Activated CD8-positive, alpha-beta T cell treated with anti-CD3 and anti-CD28 coated beads, Interleukin-2, amount 10 ng/mL, durations not matched to agents 7 days and 5 days (primary cell): ENCODE measurements at regions of chr2 and their contacts with region 1.

Region 1: GRCh38 chr2:61176755-61177726 is 15.1 kb downstream of the C2orf74 start:
- DNase-seq: peak; percentile 94
- ATAC-seq: peak; percentile 89
- H3K4me3 Mint-ChIP-seq: peak overlapping the region; percentile 85
- H3K27ac Mint-ChIP-seq: peak overlapping the region; percentile 84
- H3K4me1 Mint-ChIP-seq: peaks cover 54% of the 10 kb centered on the region
- H3K27me3 Mint-ChIP-seq: peaks cover 10% of the 10 kb centered on the region

Region 2: GRCh38 chr2:60550178-60550983 is 626.7 kb before region 1 on chr2:
- CTCF ChIA-PET with region 1: no interaction called
- POLR2A ChIA-PET with region 1: no interaction called
- DNase-seq: peak; percentile 62
- ATAC-seq: peak; percentile 53
- H3K4me3 Mint-ChIP-seq: peak overlapping the region; percentile 81
- H3K27ac Mint-ChIP-seq: no peak overlapping the region
- H3K4me1 Mint-ChIP-seq: peaks cover 33% of the 10 kb centered on the region
- H3K27me3 Mint-ChIP-seq: peaks cover 68% of the 10 kb centered on the region

Region 3: DNA sequence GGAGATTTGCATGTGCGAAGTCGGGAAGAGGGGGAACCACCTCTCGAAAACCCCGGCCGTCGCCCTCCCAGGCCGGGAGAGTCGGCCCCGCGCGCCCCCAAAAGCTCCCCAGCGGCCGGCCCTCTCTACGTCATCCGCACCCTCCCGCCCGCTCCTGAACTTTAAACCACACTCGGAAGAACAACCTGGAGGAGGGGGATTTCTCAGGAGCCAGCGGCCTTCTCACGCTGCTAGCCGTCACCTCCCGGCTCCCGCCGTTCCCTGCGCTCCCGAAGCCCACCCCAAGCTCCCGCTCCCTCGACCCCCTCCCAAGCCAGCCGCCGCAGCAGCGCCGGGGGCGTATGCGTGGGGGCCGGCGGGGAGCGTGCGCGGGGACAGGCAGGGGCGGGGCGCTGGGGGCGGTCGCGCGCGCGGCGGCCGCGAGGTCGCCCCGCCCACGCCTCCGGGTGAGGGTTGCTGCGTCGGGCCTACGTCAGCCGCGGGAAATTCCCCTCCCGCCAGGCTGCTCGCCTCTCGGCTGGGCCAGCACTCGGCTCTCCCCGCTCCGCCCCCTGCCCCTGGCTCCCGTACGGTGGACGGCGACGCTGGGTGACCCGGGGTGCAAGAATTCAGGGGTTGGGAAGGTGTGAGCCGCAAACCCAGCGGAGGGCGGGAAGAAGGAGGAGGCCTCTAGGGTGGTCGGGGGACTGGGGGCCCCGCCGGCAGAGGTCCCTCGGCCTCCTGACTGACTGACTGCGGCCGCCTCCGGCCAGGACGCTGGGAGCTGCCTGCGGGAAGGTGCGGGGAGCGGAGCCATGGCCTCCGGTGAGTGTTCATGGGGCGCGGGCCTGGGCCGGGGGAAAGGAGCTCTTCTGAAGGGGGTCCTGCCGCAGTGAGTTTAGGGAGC is 295.8 kb before region 1 on chr2 and contains the start of gene REL:
- CTCF ChIA-PET with region 1: no interaction called
- POLR2A ChIA-PET with region 1: interaction called, 10 read pairs
- DNase-seq: peak; percentile 91
- ATAC-seq: peak; percentile 89
- H3K4me3 Mint-ChIP-seq: peak within 1 kb of the TSS; percentile 95
- H3K27ac Mint-ChIP-seq: peak within 1 kb of the TSS; percentile 98
- H3K4me1 Mint-ChIP-seq: peaks cover 18% of the 10 kb centered on the region
- H3K27me3 Mint-ChIP-seq: no peaks in the 10 kb centered on the region
- total RNA-seq, gene REL: 20.1 to 21.6 TPM

Region 4: DNA sequence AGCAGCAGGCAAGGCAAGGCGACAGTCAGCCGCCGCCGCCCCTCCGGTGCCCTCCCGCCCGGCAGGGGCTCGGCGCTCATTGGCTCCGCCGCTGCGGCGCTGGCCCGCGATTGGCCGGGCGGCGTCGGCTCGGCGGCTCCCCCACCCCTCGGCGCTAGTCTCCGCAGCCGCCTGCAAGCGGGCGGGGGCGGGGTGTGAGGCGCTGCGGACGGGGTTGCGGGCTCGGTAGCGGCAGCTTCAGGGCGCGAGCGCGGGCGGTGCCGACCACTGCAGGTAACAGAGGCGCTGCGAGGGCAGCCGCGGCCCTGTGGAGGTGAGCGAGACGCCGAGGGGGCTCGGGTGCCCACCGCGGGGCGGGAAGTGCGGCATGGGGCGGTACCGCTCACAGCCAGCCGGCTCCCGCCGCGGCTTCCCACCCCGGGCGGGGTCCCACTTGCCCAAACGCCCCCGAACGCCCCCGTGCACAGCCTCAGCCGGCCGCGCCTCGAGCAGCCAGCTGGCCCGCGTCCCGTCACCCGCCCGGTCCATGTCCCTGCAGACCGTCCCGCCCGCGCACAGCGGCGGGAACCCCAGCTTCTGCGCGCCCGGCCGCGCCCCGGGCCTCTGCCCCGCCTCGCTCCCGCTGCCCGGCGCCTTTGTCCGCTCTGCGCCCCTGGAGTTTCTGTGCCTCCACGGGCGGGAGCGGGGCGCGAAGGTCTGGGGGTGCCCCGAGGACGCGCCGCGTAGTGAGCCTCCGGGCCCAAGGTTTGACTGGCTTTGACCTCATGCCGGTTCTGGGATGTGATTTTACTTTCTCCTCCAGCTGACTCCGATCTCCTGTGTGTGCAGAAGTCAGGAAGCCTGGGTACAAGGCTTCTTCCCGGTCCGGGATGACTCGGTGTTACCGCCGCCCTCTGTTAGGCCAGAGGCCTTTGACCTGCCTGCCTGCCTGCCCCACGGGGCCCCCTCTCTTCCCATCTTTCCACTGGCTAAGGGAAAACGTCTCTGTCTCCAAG is 111.0 kb before region 1 on chr2 and contains the start of gene SANBR:
- CTCF ChIA-PET with region 1: no interaction called
- POLR2A ChIA-PET with region 1: interaction called, 11 read pairs
- DNase-seq: peak; percentile 86
- ATAC-seq: peak; percentile 99
- H3K4me3 Mint-ChIP-seq: peak within 1 kb of the TSS; percentile 93
- H3K27ac Mint-ChIP-seq: peak within 1 kb of the TSS; percentile 85
- H3K4me1 Mint-ChIP-seq: peaks cover 14% of the 10 kb centered on the region
- H3K27me3 Mint-ChIP-seq: peaks cover 1% of the 10 kb centered on the region
- total RNA-seq, gene SANBR: 8.9 to 10.2 TPM

Region 5: GRCh38 chr2:61144697-61145268 is 32.3 kb before region 1 on chr2:
- CTCF ChIA-PET with region 1: no interaction called
- POLR2A ChIA-PET with region 1: interaction called, 21 read pairs
- DNase-seq: peak; percentile 95
- ATAC-seq: peak; percentile 98
- H3K4me3 Mint-ChIP-seq: peak overlapping the region; percentile 86
- H3K27ac Mint-ChIP-seq: peak overlapping the region; percentile 89
- H3K4me1 Mint-ChIP-seq: peaks cover 5% of the 10 kb centered on the region
- H3K27me3 Mint-ChIP-seq: no peaks in the 10 kb centered on the region

Region 6: DNA sequence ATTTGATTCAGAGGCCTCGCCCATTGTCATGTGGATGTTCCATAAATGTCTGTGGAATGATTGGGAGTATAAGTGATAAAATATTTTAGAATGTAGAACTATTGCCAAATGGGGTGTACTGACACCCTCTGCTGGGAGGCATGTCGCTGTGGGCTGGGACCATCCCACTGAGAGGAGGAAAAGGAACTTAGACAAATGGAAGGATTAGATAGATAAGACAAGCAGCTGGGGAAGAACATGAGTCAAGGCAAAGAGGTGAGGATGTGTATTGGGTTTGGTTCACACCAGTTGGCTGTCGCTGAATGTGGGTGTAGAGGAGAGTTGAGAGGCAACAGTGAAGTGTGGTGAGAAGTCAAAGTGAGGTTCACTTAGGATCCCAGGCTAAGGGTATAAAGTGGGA is 11.1 kb before region 1 on chr2:
- CTCF ChIA-PET with region 1: interaction called, 4 read pairs
- POLR2A ChIA-PET with region 1: interaction called, 18 read pairs
- DNase-seq: no peak
- ATAC-seq: no peak
- H3K4me3 Mint-ChIP-seq: no peak overlapping the region
- H3K27ac Mint-ChIP-seq: peak overlapping the region; percentile 3
- H3K4me1 Mint-ChIP-seq: peaks cover 3% of the 10 kb centered on the region
- H3K27me3 Mint-ChIP-seq: no peaks in the 10 kb centered on the region

Region 7: DNA sequence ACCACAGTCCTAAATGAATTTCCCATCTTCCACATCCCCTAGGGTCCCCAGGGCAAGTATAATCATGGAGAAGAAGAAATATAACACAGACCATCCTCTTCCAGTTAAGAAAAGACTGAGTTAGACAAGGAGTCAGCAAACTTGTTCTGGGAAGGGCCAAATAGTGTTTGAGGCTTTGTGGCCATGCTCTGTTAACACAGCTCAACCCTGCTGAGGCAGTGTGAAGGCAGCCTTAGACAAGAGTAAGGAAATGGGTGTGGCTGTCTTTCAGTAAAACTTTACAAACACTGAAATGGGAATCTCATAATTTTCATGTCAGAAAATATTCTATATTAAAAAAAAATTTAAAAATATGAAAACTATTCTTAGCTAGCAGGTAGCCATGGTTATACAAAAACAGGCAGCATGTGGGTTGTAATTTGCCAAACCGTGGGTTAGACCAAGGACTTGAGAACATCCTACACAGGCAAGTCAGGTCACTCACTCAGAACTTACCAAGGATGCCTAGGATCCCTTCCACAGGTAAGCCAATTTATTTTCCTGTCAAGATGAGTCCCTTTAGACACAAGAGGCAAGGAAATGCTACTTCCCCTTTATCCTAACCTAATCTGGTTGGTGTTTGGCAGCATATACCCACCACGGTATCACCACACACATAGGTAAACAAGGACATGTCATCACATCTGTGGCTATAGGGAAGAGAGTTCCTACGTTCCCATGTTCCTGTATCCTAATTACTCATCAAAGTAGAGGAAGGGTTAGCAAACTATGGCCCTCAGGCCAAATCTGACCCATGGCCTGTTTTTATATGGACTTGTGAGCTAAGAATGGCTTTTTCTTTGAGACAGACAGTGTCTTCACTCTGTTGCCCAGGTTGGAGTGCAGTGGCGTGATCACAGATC is 16.9 kb after region 1 on chr2:
- CTCF ChIA-PET with region 1: no interaction called
- POLR2A ChIA-PET with region 1: interaction called, 11 read pairs
- DNase-seq: no peak
- ATAC-seq: peak; percentile 76
- H3K4me3 Mint-ChIP-seq: no peak overlapping the region
- H3K27ac Mint-ChIP-seq: peak overlapping the region; percentile 3
- H3K4me1 Mint-ChIP-seq: peaks cover 10% of the 10 kb centered on the region
- H3K27me3 Mint-ChIP-seq: no peaks in the 10 kb centered on the region

Region 8: DNA sequence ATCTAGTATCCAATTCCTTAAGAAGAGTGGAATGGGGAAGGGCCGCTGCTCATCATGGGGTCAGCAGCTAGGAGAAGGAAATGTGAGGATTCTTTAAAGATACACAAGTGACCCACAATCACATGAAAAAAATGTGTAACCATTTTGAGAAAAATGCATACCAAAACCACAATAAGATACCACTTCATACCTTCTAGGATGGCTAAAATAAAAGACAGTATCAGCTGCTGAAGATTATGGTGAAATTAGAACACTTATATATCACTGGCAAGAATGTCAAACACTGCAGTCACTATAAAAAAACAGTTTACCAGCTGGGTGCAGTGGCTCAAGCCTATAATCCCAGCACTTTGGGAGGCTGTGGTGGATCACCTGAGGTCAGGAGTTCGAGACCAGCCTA is 52.9 kb after region 1 on chr2:
- CTCF ChIA-PET with region 1: no interaction called
- POLR2A ChIA-PET with region 1: no interaction called
- DNase-seq: no peak
- ATAC-seq: no peak
- H3K4me3 Mint-ChIP-seq: no peak overlapping the region
- H3K27ac Mint-ChIP-seq: no peak overlapping the region
- H3K4me1 Mint-ChIP-seq: no peaks in the 10 kb centered on the region
- H3K27me3 Mint-ChIP-seq: no peaks in the 10 kb centered on the region

Region 9: GRCh38 chr2:61262699-61263098 is 85.7 kb after region 1 on chr2:
- CTCF ChIA-PET with region 1: no interaction called
- POLR2A ChIA-PET with region 1: no interaction called
- DNase-seq: no peak
- ATAC-seq: no peak
- H3K4me3 Mint-ChIP-seq: no peak overlapping the region
- H3K27ac Mint-ChIP-seq: no peak overlapping the region
- H3K4me1 Mint-ChIP-seq: no peaks in the 10 kb centered on the region
- H3K27me3 Mint-ChIP-seq: no peaks in the 10 kb centered on the region

Region 10: GRCh38 chr2:61538200-61538919 is 361.3 kb after region 1 on chr2 and contains the start of gene XPO1:
- CTCF ChIA-PET with region 1: no interaction called
- POLR2A ChIA-PET with region 1: interaction called, 22 read pairs
- DNase-seq: peak; percentile 99
- ATAC-seq: peak; percentile 87
- H3K4me3 Mint-ChIP-seq: peak within 1 kb of the TSS; percentile 89
- H3K27ac Mint-ChIP-seq: peak within 1 kb of the TSS; percentile 94
- H3K4me1 Mint-ChIP-seq: peaks cover 22% of the 10 kb centered on the region
- H3K27me3 Mint-ChIP-seq: no peaks in the 10 kb centered on the region
- total RNA-seq, gene XPO1: 208 to 226 TPM